ENCODE measurements at regions of chr3 and their contacts with region 1.

Region 1: DNA sequence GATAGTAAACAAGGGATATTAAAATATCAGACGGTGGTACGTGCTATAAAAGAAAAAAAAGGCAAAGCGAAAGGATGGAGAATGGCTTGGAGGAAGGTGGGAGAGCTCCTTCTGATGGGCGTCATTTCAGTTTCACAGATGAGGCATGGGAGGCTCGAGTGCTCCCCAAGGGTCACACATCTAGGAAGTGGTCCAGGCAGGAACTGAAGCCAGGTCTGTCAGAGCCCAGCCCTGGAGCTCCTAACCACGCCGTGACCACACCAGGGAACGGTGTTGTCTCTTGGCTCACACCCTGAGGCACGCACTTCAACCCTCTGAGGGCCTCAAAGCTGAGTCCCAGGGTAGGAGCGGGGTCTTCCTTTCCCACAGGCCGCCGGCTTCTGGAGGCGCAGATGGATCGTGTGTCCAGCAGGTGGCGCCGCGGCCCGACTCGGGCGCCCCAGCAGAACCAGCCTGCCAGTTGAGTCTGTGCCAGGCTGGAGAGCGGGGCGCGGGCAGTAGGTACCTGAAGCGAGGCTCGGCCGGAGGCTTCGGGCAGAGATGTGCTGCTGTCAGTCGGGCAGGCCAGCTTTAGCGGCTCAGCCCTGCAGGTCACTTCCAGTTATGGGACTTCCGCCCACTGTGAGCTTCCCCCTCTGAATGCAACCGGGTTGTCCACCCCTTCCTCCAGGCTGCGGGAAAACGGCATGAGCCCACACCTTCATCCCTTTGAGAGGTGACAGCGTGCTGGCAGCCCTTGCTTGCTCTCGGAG is 68.1 kb downstream of the SLC6A1 start:
- DNase-seq: peak; percentile 83
- ATAC-seq: peak; percentile 80
- H3K4me3 ChIP-seq: peak overlapping the region; percentile 44
- H3K27ac ChIP-seq: no peak overlapping the region
- H3K4me1 ChIP-seq: no peaks in the 10 kb centered on the region
- H3K27me3 ChIP-seq: no peaks in the 10 kb centered on the region
- CTCF ChIP-seq: peak; percentile 96

Region 2: GRCh38 chr3:11021611-11022011 is 39.1 kb before region 1 on chr3:
- CTCF ChIA-PET with region 1: no interaction called
- POLR2A ChIA-PET with region 1: no interaction called
- intact Hi-C with region 1: no loop called
- DNase-seq: no peak
- ATAC-seq: no peak
- H3K4me3 ChIP-seq: no peak overlapping the region
- H3K27ac ChIP-seq: no peak overlapping the region
- H3K4me1 ChIP-seq: no peaks in the 10 kb centered on the region
- H3K27me3 ChIP-seq: peaks cover 60% of the 10 kb centered on the region
- CTCF ChIP-seq: no peak

Region 3: GRCh38 chr3:11201246-11202024 is 140.8 kb after region 1 on chr3:
- CTCF ChIA-PET with region 1: interaction called, 5 read pairs
- POLR2A ChIA-PET with region 1: no interaction called
- intact Hi-C with region 1: loop called (anchors 1 kb)
- DNase-seq: peak; percentile 81
- ATAC-seq: peak; percentile 81
- H3K4me3 ChIP-seq: no peak overlapping the region
- H3K27ac ChIP-seq: peak overlapping the region; percentile 55
- H3K4me1 ChIP-seq: peaks cover 33% of the 10 kb centered on the region
- H3K27me3 ChIP-seq: no peaks in the 10 kb centered on the region
- CTCF ChIP-seq: no peak